PC-3 (cell line): ENCODE measurements at regions of chr2 and their contacts with region 1.

Region 1: GRCh38 chr2:35410431-35411061 is 945.0 kb upstream of the CRIM1 start:
- DNase-seq: peak; percentile 56
- ATAC-seq: no peak
- H3K4me3 ChIP-seq: no peak overlapping the region
- H3K27ac ChIP-seq: no peak overlapping the region
- H3K4me1 ChIP-seq: no peaks in the 10 kb centered on the region
- H3K27me3 ChIP-seq: no peaks in the 10 kb centered on the region
- CTCF ChIP-seq: peak; percentile 91

Region 2: GRCh38 chr2:33673937-33674336 is 1736.6 kb before region 1 on chr2:
- CTCF ChIA-PET with region 1: interaction called, 3 read pairs
- POLR2A ChIA-PET with region 1: no interaction called
- intact Hi-C with region 1: loop called (anchors 5 kb)
- DNase-seq: peak; percentile 37
- ATAC-seq: peak; percentile 63; the same call in 1 of the 2 replicates
- H3K4me3 ChIP-seq: no peak overlapping the region
- H3K27ac ChIP-seq: no peak overlapping the region
- H3K4me1 ChIP-seq: no peaks in the 10 kb centered on the region
- H3K27me3 ChIP-seq: peaks cover 11% of the 10 kb centered on the region; the same call in 1 of the 2 replicates
- CTCF ChIP-seq: peak; percentile 72

Region 3: GRCh38 chr2:35421485-35421884 is 10.9 kb after region 1 on chr2:
- CTCF ChIA-PET with region 1: no interaction called
- POLR2A ChIA-PET with region 1: no interaction called
- intact Hi-C with region 1: no loop called
- DNase-seq: no peak
- ATAC-seq: no peak
- H3K4me3 ChIP-seq: no peak overlapping the region
- H3K27ac ChIP-seq: no peak overlapping the region
- H3K4me1 ChIP-seq: no peaks in the 10 kb centered on the region
- H3K27me3 ChIP-seq: no peaks in the 10 kb centered on the region
- CTCF ChIP-seq: no peak